ENCODE measurements at regions of chr10 and their contacts with region 1.

Region 1: GRCh38 chr10:79331709-79332108 is 15.6 kb upstream of the PPIF start:
- DNase-seq: peak; percentile 81
- ATAC-seq: peak; percentile 94
- H3K4me3 ChIP-seq: no peak overlapping the region
- H3K27ac ChIP-seq: peak overlapping the region; percentile 62
- H3K4me1 ChIP-seq: peaks cover 20% of the 10 kb centered on the region
- H3K27me3 ChIP-seq: no peaks in the 10 kb centered on the region
- CTCF ChIP-seq: no peak
- EP300 ChIP-seq: peak in 1 of 2 experiments; percentile 61; a peak in 1 of 4 replicates
- POLR2A ChIP-seq: peak; percentile 76
- RAD21 ChIP-seq: no peak

Region 2: GRCh38 chr10:79316671-79317431 is 14.9 kb before region 1 on chr10:
- CTCF ChIA-PET with region 1: interaction called, 6 read pairs
- POLR2A ChIA-PET with region 1: interaction called, 11 read pairs
- RAD21 ChIA-PET with region 1: interaction called, 6 read pairs
- SMC1A ChIA-PET with region 1: interaction called, 17 read pairs
- in situ Hi-C with region 1: no loop called
- intact Hi-C with region 1: no loop called
- DNase-seq: peak; percentile 56
- ATAC-seq: peak; percentile 82
- H3K4me3 ChIP-seq: peak overlapping the region; percentile 37; the same call in 1 of the 2 replicates
- H3K27ac ChIP-seq: peak overlapping the region; percentile 62
- H3K4me1 ChIP-seq: peaks cover 33% of the 10 kb centered on the region
- H3K27me3 ChIP-seq: no peaks in the 10 kb centered on the region
- CTCF ChIP-seq: peak; percentile 12 to 35 (median 28); a peak in 4 of 6 replicates
- EP300 ChIP-seq: peak in 1 of 2 experiments; percentile 50; a peak in 1 of 4 replicates
- POLR2A ChIP-seq: peak; percentile 56; the same call in 1 of the 2 replicates
- RAD21 ChIP-seq: 0 out of 2 replicates have a peak, but pooled peaks have one; percentile 6

Region 3: DNA sequence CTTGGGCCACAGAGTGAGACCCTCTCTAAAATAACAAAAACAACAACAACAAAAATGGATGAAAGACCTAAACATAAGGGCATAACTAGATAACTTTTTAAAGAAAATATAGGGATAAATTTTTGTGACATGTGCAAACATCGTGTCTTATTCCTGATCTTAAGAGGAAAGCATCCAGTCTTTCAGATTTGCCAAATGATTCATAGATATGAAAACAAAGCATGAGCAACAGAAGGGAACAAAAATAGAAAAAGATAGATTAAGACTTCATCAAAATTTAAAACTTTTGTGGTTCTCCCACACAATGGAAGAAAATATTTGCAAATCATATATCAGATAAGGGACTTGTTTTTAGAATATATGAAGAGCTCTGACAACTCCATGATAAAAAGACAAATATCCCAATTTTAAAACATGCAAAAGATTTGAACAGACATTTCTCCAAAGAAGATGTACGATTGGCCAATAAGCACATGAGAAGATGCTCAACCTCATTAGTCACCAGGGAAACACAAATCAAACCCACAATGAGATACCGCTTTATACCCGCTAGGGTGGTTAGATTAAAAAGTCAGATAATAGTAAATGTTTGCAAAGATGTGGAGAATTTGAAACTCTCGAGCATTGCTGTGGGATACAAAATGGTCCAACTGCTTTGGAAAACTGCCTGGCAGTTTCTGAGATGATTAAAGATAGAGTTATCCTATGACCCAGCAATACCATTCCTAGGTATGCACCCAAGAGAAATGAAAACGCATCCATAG is 35.9 kb after region 1 on chr10:
- CTCF ChIA-PET with region 1: no interaction called
- POLR2A ChIA-PET with region 1: no interaction called
- RAD21 ChIA-PET with region 1: no interaction called
- SMC1A ChIA-PET with region 1: no interaction called
- in situ Hi-C with region 1: no loop called
- intact Hi-C with region 1: no loop called
- DNase-seq: no peak
- ATAC-seq: no peak
- H3K4me3 ChIP-seq: no peak overlapping the region
- H3K27ac ChIP-seq: no peak overlapping the region
- H3K4me1 ChIP-seq: no peaks in the 10 kb centered on the region
- H3K27me3 ChIP-seq: no peaks in the 10 kb centered on the region; a peak in 2 of 4 replicates
- CTCF ChIP-seq: no peak
- EP300 ChIP-seq: no peak
- POLR2A ChIP-seq: no peak
- RAD21 ChIP-seq: no peak